H1 (cell line): ENCODE measurements at regions of chr1 and their contacts with region 1.

Region 1: GRCh38 chr1:119544165-119544762 is 37.3 kb downstream of the HSD3B1 start:
- DNase-seq: peak in 1 of 2 experiments; percentile 74
- H3K4me3 ChIP-seq: no peak overlapping the region
- H3K27ac ChIP-seq: no peak overlapping the region
- H3K4me1 ChIP-seq: no peaks in the 10 kb centered on the region
- H3K27me3 ChIP-seq: no peaks in the 10 kb centered on the region
- CTCF ChIP-seq: peak; percentile 71 to 93 (median 84)
- EP300 ChIP-seq: no peak
- POLR2A ChIP-seq: no peak
- RAD21 ChIP-seq: peak; percentile 35 to 56

Region 2: GRCh38 chr1:119453021-119453420 is 91.2 kb before region 1 on chr1:
- CTCF ChIA-PET with region 1: interaction called, 10 read pairs
- POLR2A ChIA-PET with region 1: no interaction called
- DNase-seq: no peak
- H3K4me3 ChIP-seq: no peak overlapping the region
- H3K27ac ChIP-seq: no peak overlapping the region
- H3K4me1 ChIP-seq: peaks cover 0 to 2% (median 0%) of the 10 kb centered on the region in 4 experiments; a peak in 2 of 7 replicates
- H3K27me3 ChIP-seq: no peaks in the 10 kb centered on the region
- CTCF ChIP-seq: no peak
- EP300 ChIP-seq: no peak
- POLR2A ChIP-seq: no peak
- RAD21 ChIP-seq: no peak

Region 3: DNA sequence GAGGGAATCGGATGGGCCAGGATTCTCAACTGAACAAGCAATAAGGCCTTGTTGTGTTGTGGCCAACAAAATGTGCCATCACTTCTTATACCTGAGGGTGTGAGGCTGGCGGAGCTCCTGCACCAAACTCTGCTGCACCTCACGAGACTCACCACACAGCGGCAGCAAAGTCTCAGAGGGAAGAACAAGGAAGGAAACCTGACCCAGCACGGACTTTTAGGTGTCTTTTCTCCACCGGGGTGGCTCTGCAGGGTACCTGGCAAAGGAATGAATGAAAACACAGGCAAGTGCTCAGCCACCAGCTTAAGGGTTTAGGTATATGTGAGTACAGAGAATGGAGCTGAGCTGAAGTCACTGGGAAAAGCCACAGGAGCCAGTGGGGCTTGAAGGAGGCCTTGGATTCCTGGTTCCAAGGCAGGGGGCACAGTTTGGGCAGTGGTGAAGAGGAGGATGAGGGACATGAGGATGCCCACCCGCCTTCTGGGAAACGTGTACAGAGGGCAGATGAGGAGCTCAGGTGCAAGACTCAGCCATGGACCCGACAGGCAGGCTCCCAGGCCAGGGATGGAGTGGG is 68.3 kb before region 1 on chr1:
- CTCF ChIA-PET with region 1: interaction called, 23 read pairs
- POLR2A ChIA-PET with region 1: no interaction called
- DNase-seq: peak; percentile 46 to 85
- H3K4me3 ChIP-seq: no peak overlapping the region
- H3K27ac ChIP-seq: no peak overlapping the region
- H3K4me1 ChIP-seq: peaks cover 0 to 3% (median 3%) of the 10 kb centered on the region in 4 experiments; a peak in 4 of 7 replicates
- H3K27me3 ChIP-seq: peaks cover 0 to 2% (median 0%) of the 10 kb centered on the region in 4 experiments; a peak in 1 of 7 replicates
- CTCF ChIP-seq: peak; percentile 86 to 96 (median 93)
- EP300 ChIP-seq: no peak
- POLR2A ChIP-seq: no peak
- RAD21 ChIP-seq: peak; percentile 89 to 92

Region 4: GRCh38 chr1:119556423-119556822 is 12.2 kb after region 1 on chr1:
- CTCF ChIA-PET with region 1: interaction called, 17 read pairs
- POLR2A ChIA-PET with region 1: no interaction called
- DNase-seq: no peak
- H3K4me3 ChIP-seq: no peak overlapping the region
- H3K27ac ChIP-seq: no peak overlapping the region
- H3K4me1 ChIP-seq: no peaks in the 10 kb centered on the region
- H3K27me3 ChIP-seq: no peaks in the 10 kb centered on the region
- CTCF ChIP-seq: no peak
- EP300 ChIP-seq: no peak
- POLR2A ChIP-seq: no peak
- RAD21 ChIP-seq: no peak

Region 5: DNA sequence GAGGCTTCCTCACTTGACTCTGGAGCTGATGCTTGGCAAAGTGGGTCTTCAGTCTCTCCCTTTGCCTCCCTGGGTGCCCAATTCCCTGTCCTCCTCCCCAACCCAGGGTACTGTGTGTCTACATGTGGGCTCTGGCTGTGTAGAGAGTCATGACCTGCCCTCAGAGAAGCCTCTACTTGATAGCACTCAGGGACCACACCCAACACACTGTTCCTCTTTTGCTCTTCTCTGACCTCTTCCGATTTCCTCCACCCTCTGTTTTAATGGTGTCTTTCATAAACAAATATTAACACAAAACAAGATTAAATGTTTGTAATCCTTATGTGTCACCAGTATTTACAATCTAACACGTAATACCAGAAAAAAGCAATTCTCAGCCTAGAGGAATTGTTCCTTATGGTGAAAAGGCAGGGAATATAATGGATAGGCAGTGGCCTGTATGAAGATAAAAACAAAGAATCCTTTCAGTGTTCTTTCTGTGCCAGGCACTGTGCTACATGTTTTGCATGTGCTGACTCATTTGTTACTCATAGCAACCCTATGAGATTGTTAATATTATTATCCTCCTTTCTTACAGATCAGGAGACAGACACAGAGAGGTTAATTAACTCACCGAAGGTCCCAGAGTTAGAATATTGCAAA is 21.0 kb after region 1 on chr1:
- CTCF ChIA-PET with region 1: interaction called, 13 read pairs
- POLR2A ChIA-PET with region 1: no interaction called
- DNase-seq: no peak
- H3K4me3 ChIP-seq: no peak overlapping the region
- H3K27ac ChIP-seq: no peak overlapping the region
- H3K4me1 ChIP-seq: no peaks in the 10 kb centered on the region
- H3K27me3 ChIP-seq: no peaks in the 10 kb centered on the region; a peak in 1 of 7 replicates
- CTCF ChIP-seq: no peak
- EP300 ChIP-seq: no peak
- POLR2A ChIP-seq: no peak
- RAD21 ChIP-seq: no peak

Region 6: GRCh38 chr1:119613769-119614720 is 69.8 kb after region 1 on chr1:
- CTCF ChIA-PET with region 1: interaction called, 10 read pairs
- POLR2A ChIA-PET with region 1: no interaction called
- DNase-seq: peak; percentile 69 to 96
- H3K4me3 ChIP-seq: no peak overlapping the region
- H3K27ac ChIP-seq: no peak overlapping the region
- H3K4me1 ChIP-seq: peaks cover 0 to 3% (median under 1%) of the 10 kb centered on the region in 4 experiments; a peak in 5 of 7 replicates
- H3K27me3 ChIP-seq: no peaks in the 10 kb centered on the region
- CTCF ChIP-seq: peak; percentile 62 to 94 (median 80)
- EP300 ChIP-seq: no peak
- POLR2A ChIP-seq: no peak
- RAD21 ChIP-seq: peak; percentile 92 to 97